Activated CD8-positive, alpha-beta T cell treated with anti-CD3 and anti-CD28 coated beads for 36 hours (primary cell): ENCODE measurements at regions of chr17 and their contacts with region 1.

Region 1: DNA sequence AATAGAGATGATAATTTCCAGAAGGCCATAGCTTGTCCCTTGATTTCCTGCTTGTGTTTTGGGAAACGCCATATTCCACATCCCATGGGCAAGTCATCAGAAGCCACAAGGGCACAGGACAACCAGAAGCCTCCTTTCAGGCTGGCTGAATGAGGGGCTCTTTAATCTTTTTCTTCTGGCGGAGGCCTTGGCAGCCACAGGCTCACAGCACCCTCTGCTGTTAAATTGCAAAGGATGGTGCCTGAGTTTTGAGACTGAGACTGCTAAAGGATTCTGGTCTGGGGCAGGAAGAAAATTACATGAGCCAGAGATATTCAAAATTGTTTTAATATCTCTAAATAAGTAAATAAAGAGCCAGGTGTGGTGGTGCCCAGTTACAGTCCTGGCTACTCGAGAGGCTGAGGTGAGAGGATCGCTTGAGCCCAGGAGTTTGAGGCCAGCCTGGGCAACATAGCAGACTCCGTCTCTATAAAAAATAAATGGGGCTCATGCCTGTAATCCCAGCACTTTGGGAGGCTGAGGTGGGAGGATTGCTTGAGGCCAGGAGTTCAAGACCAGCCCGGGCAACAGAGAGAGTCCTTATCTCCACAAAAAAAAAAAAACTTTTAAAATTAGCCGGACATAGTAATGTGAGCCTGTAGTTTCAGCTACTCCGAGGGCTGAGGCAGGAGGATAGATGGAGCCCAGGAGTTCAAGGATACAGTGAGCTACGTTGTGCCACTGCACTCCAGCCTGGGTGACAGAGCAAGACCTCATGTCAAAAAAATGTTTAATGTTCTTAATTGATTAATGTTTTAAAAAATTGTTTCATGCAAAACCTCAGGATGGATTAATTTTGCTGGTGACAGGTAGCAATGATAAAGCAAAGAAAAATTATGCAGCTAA is 26.3 kb downstream of the AARSD1 start:
- DNase-seq: peak; percentile 53
- ATAC-seq: peak; percentile 60
- H3K4me3 Mint-ChIP-seq: no peak overlapping the region
- H3K27ac Mint-ChIP-seq: no peak overlapping the region
- H3K4me1 Mint-ChIP-seq: no peaks in the 10 kb centered on the region
- H3K27me3 Mint-ChIP-seq: peaks cover 4% of the 10 kb centered on the region
- CTCF ChIP-seq: peak; percentile 60

Region 2: GRCh38 chr17:42720996-42721583 is 216.9 kb before region 1 on chr17:
- CTCF ChIA-PET with region 1: interaction called, 3 read pairs
- POLR2A ChIA-PET with region 1: no interaction called
- intact Hi-C with region 1: loop called (anchors 10 kb)
- DNase-seq: peak; percentile 43
- ATAC-seq: peak; percentile 75
- H3K4me3 Mint-ChIP-seq: no peak overlapping the region
- H3K27ac Mint-ChIP-seq: no peak overlapping the region
- H3K4me1 Mint-ChIP-seq: no peaks in the 10 kb centered on the region
- H3K27me3 Mint-ChIP-seq: no peaks in the 10 kb centered on the region
- CTCF ChIP-seq: peak; percentile 81

Region 3: DNA sequence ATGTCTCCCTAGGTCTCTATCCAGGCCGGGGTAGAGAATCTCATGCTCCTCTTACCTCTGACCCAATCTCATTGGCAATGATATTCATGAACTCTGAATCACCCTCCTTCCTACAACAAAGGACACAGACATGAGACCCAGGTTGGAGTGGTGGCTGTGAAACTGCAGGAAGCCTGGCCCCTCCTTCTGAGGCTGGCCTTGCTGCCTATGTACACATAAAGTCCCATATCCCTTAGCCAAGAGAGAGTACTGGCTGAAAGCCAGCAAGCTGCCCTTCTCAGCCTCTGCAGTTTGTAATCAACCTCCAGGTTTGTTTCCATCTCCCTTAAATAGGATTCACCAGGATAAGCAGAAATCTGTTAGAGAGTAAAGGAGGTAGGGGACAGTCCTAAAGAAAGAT is 15.7 kb after region 1 on chr17:
- CTCF ChIA-PET with region 1: no interaction called
- POLR2A ChIA-PET with region 1: no interaction called
- intact Hi-C with region 1: no loop called
- DNase-seq: no peak
- ATAC-seq: no peak
- H3K4me3 Mint-ChIP-seq: no peak overlapping the region
- H3K27ac Mint-ChIP-seq: peak overlapping the region; percentile 61
- H3K4me1 Mint-ChIP-seq: no peaks in the 10 kb centered on the region
- H3K27me3 Mint-ChIP-seq: no peaks in the 10 kb centered on the region
- CTCF ChIP-seq: no peak